Right cardiac atrium (tissue), 5 donors: ENCODE measurements at regions of chr14 and their contacts with region 1.

Region 1: DNA sequence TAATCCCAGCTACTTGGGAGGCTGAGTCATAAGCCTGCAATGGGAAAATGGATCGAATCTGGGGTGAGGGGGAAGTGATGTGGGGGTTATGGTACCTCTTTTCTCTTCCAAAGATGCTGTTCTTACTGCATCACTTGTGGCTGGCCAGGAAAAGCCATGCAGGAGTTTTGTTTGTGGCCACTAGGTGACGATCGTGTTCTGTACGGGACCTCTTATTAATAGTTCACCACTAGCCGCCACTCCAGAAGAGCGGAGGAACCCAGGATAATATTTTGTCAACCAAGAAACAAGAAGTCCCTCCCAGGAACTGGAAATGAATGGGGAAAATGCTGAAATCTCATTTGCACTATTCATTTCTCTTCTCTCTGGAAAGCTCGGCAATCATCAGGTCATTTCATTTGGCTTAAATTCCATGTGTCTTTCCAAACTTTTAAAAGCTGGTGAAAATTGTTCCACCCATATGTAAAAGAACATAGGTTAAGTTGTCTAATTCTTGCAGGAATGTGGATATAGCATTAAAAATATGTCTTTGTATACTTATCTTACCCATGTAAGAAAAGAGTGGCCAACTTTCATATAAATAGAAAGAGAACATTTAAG is 8.9 kb downstream of the GPR65 start:
- DNase-seq: peak; percentile 61 to 80 (median 75)
- ATAC-seq: peak; percentile 92 to 94
- H3K4me3 ChIP-seq: no peak overlapping the region
- H3K27ac ChIP-seq: no peak overlapping the region
- H3K4me1 ChIP-seq: no peaks in the 10 kb centered on the region
- H3K27me3 ChIP-seq: no peaks in the 10 kb centered on the region

Region 2: GRCh38 chr14:88168498-88169165 is 154.8 kb after region 1 on chr14:
- intact Hi-C with region 1: loop called in 1 of 4 experiments (anchors 10 kb)
- DNase-seq: no peak
- ATAC-seq: peak; percentile 64 to 75
- H3K4me3 ChIP-seq: no peak overlapping the region
- H3K27ac ChIP-seq: no peak overlapping the region
- H3K4me1 ChIP-seq: no peaks in the 10 kb centered on the region
- H3K27me3 ChIP-seq: no peaks in the 10 kb centered on the region

Region 3: GRCh38 chr14:88385345-88386101 is 371.7 kb after region 1 on chr14 and contains the start of gene SPATA7:
- intact Hi-C with region 1: loop called in 1 of 4 experiments (anchors 10 kb)
- DNase-seq: peak; percentile 97 to 98 (median 97)
- ATAC-seq: peak; percentile 100
- H3K4me3 ChIP-seq: peak within 1 kb of the TSS; percentile 62
- H3K27ac ChIP-seq: peak within 1 kb of the TSS; percentile 32
- H3K4me1 ChIP-seq: no peaks in the 10 kb centered on the region
- H3K27me3 ChIP-seq: no peaks in the 10 kb centered on the region
- total RNA-seq, gene SPATA7: 6.4 to 15.4 (median 13.7) TPM